ENCODE measurements at regions of chr4 and their contacts with region 1.

Region 1: DNA sequence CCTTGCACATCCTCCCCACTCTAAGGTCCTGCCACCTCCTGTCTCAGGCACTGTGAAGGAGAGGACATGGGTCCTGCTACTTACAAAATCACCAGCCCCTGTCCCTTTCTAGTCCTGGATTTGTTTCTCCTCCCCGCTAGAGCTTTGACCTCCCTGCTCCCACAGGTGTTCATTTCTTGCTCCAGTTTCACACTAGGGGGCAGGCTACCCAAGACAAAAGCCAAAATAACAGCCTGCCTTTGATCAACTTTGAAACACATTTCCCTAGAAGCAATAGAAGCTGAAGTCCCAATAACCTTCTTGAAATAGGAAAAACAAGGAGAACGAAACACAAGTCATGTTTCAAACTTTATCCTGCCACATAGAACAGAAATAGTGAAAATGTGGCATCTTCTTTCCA is 164.4 kb downstream of the QDPR start:
- DNase-seq: peak; percentile 35 to 56
- H3K4me3 ChIP-seq: no peak overlapping the region
- H3K27ac ChIP-seq: no peak overlapping the region
- H3K4me1 ChIP-seq: no peaks in the 10 kb centered on the region
- H3K27me3 ChIP-seq: no peaks in the 10 kb centered on the region
- CTCF ChIP-seq: peak; percentile 23 to 85 (median 62)
- POLR2A ChIP-seq: no peak

Region 2: GRCh38 chr4:17447675-17448298 is 100.3 kb after region 1 on chr4:
- intact Hi-C with region 1: loop called (anchors 5 kb)
- DNase-seq: peak; percentile 47 to 58
- H3K4me3 ChIP-seq: no peak overlapping the region
- H3K27ac ChIP-seq: no peak overlapping the region
- H3K4me1 ChIP-seq: no peaks in the 10 kb centered on the region
- H3K27me3 ChIP-seq: no peaks in the 10 kb centered on the region
- CTCF ChIP-seq: peak; percentile 30 to 86 (median 66)
- POLR2A ChIP-seq: no peak